Dendritic cell treated with granulocyte-macrophage colony-stimulating factor and Interleukin-4, amounts not matched to agents 40 ng/mL and 50 ng/mL, for 4 days (primary cell): ENCODE measurements at regions of chr4 and their contacts with region 1.

Region 1: DNA sequence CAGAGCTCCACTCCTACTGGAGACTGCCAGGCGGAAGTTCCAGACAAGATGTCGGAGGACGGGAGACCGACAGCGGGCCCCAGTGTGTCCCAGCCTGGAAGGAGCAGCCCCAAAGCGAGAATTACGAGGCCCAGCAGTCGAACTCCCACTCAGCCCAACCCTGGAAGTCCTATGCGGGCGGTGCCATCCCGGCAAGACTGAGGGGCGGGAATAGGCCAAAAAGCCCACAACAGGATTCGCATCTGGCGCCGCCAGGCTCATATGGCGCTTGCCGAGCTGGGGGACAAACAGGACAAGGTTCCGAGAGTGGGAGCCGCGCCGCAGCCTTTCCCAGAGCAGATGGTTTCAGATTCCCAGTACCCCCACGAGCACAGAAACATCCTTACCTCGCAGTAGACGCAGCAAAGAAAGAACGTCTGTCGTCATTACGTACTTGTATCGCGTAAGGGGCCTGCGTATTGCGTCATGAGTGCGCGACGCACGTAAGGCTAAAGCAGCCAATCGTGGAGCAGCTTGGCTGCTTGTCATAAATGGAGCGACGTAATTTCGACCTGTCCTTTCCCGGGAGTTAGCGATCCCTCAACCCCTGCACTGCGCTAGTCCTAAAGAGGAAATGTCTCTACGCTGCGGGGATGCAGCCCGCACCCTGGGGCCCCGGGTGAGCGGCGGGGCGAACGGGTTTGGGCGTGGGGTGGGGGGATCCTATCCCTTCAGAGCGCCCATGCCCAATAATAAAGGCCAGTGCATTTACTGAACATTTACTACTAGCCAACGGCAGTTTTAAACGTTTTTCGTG is at the starts of genes LIAS and RPL9:
- H3K4me3 Mint-ChIP-seq: peak within 1 kb of the TSS; percentile 94
- H3K27ac Mint-ChIP-seq: peak within 1 kb of the TSS; percentile 99
- H3K4me1 Mint-ChIP-seq: peaks cover 15% of the 10 kb centered on the region
- H3K27me3 Mint-ChIP-seq: no peaks in the 10 kb centered on the region

Region 2: DNA sequence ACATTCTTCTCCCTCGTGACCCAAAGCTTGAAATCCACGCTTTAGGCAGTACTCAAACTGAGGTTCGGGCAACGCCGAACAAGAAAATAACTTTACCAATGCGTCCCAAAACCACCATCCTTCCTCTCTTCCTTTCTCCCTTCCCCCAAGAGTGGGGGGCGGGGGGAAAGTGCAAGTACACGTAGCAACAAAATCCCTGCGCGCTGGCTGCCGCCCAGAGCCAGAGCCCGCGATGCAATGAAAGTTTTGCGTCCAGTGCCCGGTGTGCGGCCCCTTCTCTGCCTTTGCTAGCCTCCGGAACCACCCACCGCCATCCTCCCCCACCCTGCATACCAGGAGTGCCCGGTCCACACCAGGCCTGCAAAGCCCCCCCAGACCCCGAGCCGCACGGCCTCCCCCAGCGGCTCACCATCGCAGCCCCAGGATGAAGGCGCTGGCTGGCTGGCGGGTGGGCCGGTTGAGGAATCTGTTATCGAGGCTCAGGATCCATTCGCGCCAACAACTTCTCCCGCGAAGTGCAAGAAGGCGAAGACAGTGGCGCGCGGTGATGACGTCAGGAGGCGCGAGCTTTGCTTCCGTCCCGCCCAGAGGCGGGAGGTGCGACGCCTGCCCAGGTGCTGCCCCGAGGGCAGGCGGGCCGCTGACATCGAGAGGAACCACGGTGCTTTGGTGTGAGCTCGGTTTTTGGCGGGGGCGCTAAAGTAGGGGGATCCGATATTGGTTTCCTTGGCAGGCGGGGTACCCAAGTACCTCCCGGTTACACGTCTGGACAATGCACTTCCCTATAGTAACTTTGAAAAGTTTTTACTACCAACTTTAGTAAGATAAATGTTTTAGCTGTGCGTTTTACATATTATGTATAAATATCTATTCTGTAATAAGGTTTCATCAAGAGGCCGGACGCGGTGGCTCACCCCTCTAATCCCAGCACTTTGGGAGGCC is 92.6 kb before region 1 on chr4 and contains the start of gene RFC1:
- intact Hi-C with region 1: loop called (anchors 2 kb)
- H3K4me3 Mint-ChIP-seq: peak within 1 kb of the TSS; percentile 95
- H3K27ac Mint-ChIP-seq: peak within 1 kb of the TSS; percentile 96
- H3K4me1 Mint-ChIP-seq: peaks cover 21% of the 10 kb centered on the region
- H3K27me3 Mint-ChIP-seq: no peaks in the 10 kb centered on the region

Region 3: DNA sequence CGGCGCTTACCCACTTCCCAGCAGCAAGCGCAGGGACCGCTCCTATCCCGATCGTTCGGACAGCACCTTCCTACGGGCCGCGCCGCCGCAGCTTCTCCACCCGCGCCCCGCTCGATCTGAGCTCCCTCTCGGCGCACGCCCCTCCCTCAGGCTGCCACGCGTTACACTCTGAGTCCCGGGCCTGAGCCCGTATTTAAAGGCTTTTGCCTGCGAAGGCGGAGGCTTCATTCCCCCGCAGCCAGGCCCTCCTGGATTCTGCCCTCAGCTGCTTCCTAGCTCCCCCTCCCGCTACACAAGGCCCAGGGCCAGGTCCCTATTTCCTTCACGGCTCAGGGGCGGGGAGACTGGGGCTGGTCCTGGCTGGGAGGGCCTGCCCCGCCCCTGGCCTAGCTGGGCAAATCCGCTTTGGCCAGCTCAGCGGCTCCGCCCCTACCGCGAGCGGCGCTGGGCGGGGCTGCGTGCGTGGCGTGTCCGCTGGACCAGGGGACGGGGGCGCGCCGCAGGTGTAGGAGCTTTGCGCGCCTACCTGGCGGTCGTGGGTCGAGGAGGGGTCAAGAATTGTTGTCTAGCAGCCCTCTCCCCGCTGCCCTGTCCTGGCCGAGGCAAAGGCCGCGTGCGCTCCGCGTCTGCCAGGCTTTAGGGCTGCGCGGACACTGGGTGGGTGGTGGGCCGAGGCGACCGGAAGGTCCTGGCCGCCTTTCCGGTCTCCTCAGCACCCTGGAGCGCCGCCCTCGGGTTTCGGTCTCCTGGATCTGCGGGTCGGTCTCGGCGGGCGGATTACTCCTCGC is 68.8 kb after region 1 on chr4 and contains the start of gene UGDH:
- intact Hi-C with region 1: loop called (anchors 5 kb)
- H3K4me3 Mint-ChIP-seq: peak within 1 kb of the TSS; percentile 99
- H3K27ac Mint-ChIP-seq: peak within 1 kb of the TSS; percentile 93
- H3K4me1 Mint-ChIP-seq: peaks cover 19% of the 10 kb centered on the region
- H3K27me3 Mint-ChIP-seq: no peaks in the 10 kb centered on the region